ENCODE measurements at regions of chr12 and their contacts with region 1.

Region 1: GRCh38 chr12:19177754-19178153 is 48.2 kb downstream of the PLEKHA5 start:
- DNase-seq: peak; percentile 55
- H3K4me3 ChIP-seq: no peak overlapping the region
- H3K27ac ChIP-seq: no peak overlapping the region
- H3K4me1 ChIP-seq: no peaks in the 10 kb centered on the region; the same call in 1 of the 2 replicates
- H3K27me3 ChIP-seq: no peaks in the 10 kb centered on the region

Region 2: GRCh38 chr12:18250313-18250916 is 927.3 kb before region 1 on chr12:
- in situ Hi-C with region 1: loop called (anchors 10 kb)
- DNase-seq: peak; percentile 84
- H3K4me3 ChIP-seq: no peak overlapping the region
- H3K27ac ChIP-seq: no peak overlapping the region
- H3K4me1 ChIP-seq: no peaks in the 10 kb centered on the region
- H3K27me3 ChIP-seq: no peaks in the 10 kb centered on the region

Region 3: DNA sequence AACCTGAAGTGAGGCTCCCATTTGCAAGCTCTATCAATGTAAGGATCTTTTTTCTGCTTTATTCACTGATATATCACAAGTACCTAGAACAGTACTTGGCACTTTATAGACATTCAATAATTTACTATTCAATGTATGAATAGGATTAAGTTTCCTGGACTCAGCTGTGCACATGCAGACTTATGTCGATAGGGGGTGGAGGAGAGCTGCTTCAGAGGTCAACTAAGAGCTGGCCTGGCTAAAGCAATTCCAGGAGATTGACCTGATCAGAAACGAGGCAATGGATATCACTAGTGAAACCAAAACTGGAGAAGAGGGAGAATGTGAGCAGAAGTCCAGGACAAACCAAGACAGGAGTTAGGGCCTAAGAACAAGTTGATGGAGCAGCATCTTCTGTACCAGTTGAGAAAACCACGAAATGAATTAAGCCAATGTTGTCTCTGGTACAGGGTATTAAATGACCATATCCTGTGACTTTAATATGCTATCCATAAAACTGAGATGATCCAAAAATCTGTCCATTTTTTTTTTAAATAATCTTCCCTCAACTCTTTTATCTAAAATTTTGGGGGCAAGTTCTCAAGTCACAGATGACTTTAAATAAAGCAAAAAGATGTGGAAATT is 747.2 kb before region 1 on chr12:
- in situ Hi-C with region 1: loop called (anchors 10 kb)
- DNase-seq: peak; percentile 76
- H3K4me3 ChIP-seq: no peak overlapping the region
- H3K27ac ChIP-seq: no peak overlapping the region
- H3K4me1 ChIP-seq: peaks cover 3% of the 10 kb centered on the region; the same call in 1 of the 2 replicates
- H3K27me3 ChIP-seq: no peaks in the 10 kb centered on the region

Region 4: DNA sequence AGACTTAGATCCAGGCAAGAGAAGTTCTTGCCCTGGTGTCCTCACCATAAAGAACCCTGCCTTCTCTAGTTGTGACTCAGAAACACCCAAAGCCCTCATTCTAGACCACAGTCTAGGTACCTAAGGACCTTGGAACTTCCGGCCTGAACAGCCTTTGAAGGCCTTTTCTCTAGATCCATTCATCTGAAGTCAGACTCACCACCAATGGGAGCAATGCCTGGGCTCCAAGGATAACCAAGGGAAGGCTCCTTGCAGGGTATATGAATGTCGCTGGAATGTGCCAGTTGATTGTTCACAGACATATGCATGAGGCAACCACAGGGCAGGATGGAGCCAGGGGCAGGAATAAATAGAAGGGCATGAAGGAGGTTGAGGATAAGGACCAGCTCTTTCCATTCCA is 526.2 kb before region 1 on chr12:
- in situ Hi-C with region 1: no loop called
- DNase-seq: peak; percentile 6
- H3K4me3 ChIP-seq: no peak overlapping the region
- H3K27ac ChIP-seq: no peak overlapping the region
- H3K4me1 ChIP-seq: no peaks in the 10 kb centered on the region
- H3K27me3 ChIP-seq: no peaks in the 10 kb centered on the region